ENCODE measurements at regions of chr6 and their contacts with region 1.

Region 1: GRCh38 chr6:35342258-35343091 is at the start of gene PPARD:
- DNase-seq: peak; percentile 96
- H3K4me3 Mint-ChIP-seq: peak within 1 kb of the TSS; percentile 93
- H3K27ac Mint-ChIP-seq: peak within 1 kb of the TSS; percentile 84
- H3K4me1 Mint-ChIP-seq: peaks cover 33% of the 10 kb centered on the region
- H3K27me3 Mint-ChIP-seq: no peaks in the 10 kb centered on the region
- total RNA-seq, gene PPARD: 17.4 and 18.8 TPM in 2 replicates

Region 2: DNA sequence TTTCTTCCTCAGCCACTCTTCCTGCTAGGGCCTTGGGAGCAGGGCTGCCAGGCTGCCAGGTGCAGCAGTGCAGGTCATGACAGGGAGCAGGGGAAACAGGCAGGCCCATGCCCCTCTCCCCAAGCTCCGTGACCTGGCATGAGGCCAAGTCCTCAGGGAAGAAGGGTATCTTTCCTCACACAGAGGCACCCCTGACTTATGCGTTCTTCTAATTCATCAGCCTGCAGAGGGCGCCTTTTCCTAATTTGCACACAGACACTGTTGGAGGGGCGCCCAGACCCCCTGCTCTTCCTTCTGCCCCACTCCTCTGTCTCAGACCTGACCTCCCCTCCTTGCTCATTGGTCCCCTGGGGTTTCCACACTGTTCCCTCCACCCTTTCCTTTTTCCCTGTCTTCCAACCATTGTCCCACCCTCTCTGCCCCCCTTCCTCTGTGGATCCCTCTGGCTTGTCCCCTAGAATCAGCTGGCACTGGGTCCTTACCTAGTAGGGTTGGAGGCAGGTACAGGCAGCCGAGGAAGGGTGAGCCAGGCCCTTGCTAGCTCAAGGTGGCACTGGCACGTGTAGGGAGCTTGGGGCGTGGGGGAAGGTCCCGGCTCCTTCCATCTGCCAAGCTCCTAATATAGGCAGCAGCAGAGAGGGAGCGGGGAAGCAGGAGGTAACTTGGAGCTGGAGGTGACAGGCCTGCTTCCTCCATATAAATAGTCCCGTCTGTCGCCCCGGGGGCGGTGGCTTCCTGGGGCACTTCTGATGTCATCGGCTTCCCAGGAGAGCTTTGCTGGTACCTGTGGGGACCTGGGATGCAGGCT is 1383.7 kb before region 1 on chr6:
- intact Hi-C with region 1: no loop called
- DNase-seq: no peak
- H3K4me3 Mint-ChIP-seq: no peak overlapping the region
- H3K27ac Mint-ChIP-seq: no peak overlapping the region
- H3K4me1 Mint-ChIP-seq: peaks cover 6% of the 10 kb centered on the region
- H3K27me3 Mint-ChIP-seq: no peaks in the 10 kb centered on the region

Region 3: GRCh38 chr6:35247642-35248231 is 94.7 kb before region 1 on chr6:
- intact Hi-C with region 1: no loop called
- DNase-seq: no peak
- H3K4me3 Mint-ChIP-seq: peak overlapping the region; percentile 2
- H3K27ac Mint-ChIP-seq: peak overlapping the region; percentile 0
- H3K4me1 Mint-ChIP-seq: peaks cover 27% of the 10 kb centered on the region
- H3K27me3 Mint-ChIP-seq: no peaks in the 10 kb centered on the region

Region 4: GRCh38 chr6:35259194-35259947 is 83.1 kb before region 1 on chr6 and contains the start of gene ZNF76:
- intact Hi-C with region 1: loop called (anchors 1 kb)
- DNase-seq: peak; percentile 87
- H3K4me3 Mint-ChIP-seq: peak within 1 kb of the TSS; percentile 96
- H3K27ac Mint-ChIP-seq: peak within 1 kb of the TSS; percentile 88
- H3K4me1 Mint-ChIP-seq: peaks cover 40% of the 10 kb centered on the region
- H3K27me3 Mint-ChIP-seq: no peaks in the 10 kb centered on the region
- total RNA-seq, gene ZNF76: 32.8 and 33.1 TPM in 2 replicates

Region 5: DNA sequence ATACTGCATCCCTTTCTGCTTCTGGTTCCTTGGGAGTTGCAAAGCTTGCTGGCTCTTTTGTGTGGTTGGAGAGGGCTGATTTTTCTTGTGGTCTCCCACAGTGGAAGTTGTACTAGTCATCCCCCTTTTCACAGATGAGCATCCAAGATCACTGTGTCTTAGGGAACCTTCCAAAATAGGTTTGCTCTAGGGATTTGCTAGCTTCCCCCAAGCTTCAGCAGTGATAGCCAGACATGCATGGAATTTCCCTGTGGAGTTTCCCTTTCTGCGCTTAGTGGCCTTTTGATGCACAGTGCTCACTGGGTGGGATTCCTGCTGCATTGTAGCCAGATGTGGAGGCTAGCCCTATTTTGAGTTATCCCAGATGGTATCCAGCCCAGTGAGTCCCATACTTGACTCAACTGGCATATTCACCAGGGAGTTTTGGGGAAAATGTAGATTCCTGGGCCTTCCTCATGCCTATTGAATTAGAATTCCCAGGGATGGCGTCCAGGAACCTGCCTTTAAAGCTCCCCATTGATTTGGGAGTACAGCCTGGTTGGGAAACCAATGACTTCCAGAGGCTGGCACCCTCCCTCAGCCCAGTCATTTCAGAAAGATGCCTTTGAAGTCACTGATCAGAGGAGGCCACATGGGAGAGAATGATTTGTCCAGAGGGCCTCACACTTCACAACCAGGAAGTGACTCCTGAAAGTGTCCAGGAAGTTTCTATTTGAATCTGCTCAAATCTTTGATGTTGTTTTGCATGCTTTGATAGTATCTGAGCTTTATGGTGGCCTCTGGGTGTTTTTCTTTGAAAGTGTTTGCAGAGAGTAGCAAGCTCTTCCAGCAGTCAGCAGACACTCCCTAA is 25.8 kb after region 1 on chr6:
- intact Hi-C with region 1: loop called (anchors 1 kb)
- DNase-seq: peak; percentile 20
- H3K4me3 Mint-ChIP-seq: no peak overlapping the region
- H3K27ac Mint-ChIP-seq: peak overlapping the region; percentile 50
- H3K4me1 Mint-ChIP-seq: peaks cover 56% of the 10 kb centered on the region
- H3K27me3 Mint-ChIP-seq: no peaks in the 10 kb centered on the region

Region 6: GRCh38 chr6:35468181-35468979 is 125.9 kb after region 1 on chr6 and contains the start of gene RPL10A:
- intact Hi-C with region 1: loop called (anchors 1 kb)
- DNase-seq: peak; percentile 93
- H3K4me3 Mint-ChIP-seq: peak within 1 kb of the TSS; percentile 97
- H3K27ac Mint-ChIP-seq: peak within 1 kb of the TSS; percentile 98
- H3K4me1 Mint-ChIP-seq: peaks cover 36% of the 10 kb centered on the region
- H3K27me3 Mint-ChIP-seq: no peaks in the 10 kb centered on the region
- total RNA-seq, gene RPL10A: 1,580 and 1,584 TPM in 2 replicates

Region 7: DNA sequence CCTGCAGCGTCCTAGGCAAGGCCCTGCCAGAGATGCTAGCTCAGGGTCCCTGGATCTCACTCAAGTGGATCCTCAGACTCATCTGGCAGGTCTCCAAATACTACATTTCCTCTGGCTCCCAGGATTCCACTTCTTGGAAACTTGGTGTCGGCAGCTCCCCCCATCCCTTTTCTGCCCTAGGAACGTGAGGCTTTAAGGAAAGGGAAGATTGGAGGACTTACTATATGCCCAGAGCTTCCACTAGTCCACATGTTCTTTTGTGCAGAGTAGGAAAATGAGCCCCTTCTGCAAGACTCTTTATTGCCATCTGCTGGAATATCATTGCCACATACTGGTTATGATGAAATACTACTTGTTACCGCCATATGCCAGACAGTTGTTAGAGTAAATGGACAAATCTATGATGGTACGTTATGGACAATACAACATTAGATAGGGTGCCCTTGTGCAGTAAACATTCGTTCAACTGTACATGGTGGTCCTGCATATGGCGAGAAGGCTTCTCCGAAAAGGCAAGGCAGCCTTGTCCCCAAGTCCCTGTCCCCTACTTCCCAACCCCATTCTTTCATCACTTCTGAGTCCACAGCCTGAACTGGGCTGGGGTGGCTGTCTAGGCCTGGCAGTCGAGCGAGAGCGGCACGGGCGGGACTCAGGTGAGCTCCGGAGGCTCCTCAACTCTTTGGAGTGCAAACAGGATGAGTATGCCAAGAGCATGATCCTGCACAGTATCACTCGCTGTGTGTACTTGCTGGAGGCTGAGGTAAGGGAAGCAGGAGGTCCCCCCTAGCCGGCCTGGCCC is 395.1 kb after region 1 on chr6:
- intact Hi-C with region 1: loop called (anchors 1 kb)
- DNase-seq: no peak
- H3K4me3 Mint-ChIP-seq: no peak overlapping the region
- H3K27ac Mint-ChIP-seq: peak overlapping the region; percentile 66
- H3K4me1 Mint-ChIP-seq: peaks cover 32% of the 10 kb centered on the region
- H3K27me3 Mint-ChIP-seq: no peaks in the 10 kb centered on the region